ENCODE measurements at regions of chr15 and their contacts with region 1.

Region 1: GRCh38 chr15:99014803-99015676 is 7.4 kb upstream of the PGPEP1L start:
- DNase-seq: peak; percentile 75 to 92
- ATAC-seq: peak; percentile 88 to 91 (median 88)
- H3K4me3 ChIP-seq: peak overlapping the region; percentile 68
- H3K27ac ChIP-seq: peak overlapping the region; percentile 98
- H3K4me1 ChIP-seq: peaks cover 29% of the 10 kb centered on the region
- H3K27me3 ChIP-seq: peaks cover 0 to 2% (median 0%) of the 10 kb centered on the region in 3 donors
- CTCF ChIP-seq: no peak

Region 2: DNA sequence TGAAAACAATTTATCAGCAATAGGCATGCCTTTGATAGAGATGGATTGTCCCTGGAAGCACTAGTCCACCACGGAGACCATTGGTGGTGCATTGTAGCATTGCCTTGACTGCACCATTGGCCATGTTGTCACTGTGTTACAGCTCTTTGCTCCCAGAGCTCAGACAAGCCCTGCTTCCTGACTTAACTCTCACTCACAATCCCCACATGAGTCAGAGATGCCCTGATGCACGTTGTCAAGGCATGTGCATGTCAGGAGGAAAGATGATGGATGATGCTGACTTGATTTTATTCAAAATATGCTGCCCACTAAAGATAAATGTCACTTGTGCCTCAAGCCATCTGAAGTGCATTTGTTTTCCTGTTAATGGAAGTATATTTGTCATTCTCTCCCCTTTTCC is 788.5 kb before region 1 on chr15:
- intact Hi-C with region 1: no loop called
- DNase-seq: no peak
- ATAC-seq: no peak
- H3K4me3 ChIP-seq: no peak overlapping the region
- H3K27ac ChIP-seq: no peak overlapping the region
- H3K4me1 ChIP-seq: no peaks in the 10 kb centered on the region
- H3K27me3 ChIP-seq: peaks cover 0 to 2% (median 0%) of the 10 kb centered on the region in 3 donors
- CTCF ChIP-seq: no peak

Region 3: GRCh38 chr15:98954411-98954810 is 60.6 kb before region 1 on chr15:
- intact Hi-C with region 1: loop called in 1 of 2 experiments (anchors 5 kb)
- DNase-seq: peak; percentile 72 to 87
- ATAC-seq: peak; percentile 62 to 76 (median 73)
- H3K4me3 ChIP-seq: no peak overlapping the region
- H3K27ac ChIP-seq: peak overlapping the region; percentile 91
- H3K4me1 ChIP-seq: peaks cover 53% of the 10 kb centered on the region
- H3K27me3 ChIP-seq: no peaks in the 10 kb centered on the region
- CTCF ChIP-seq: no peak

Region 4: GRCh38 chr15:99053511-99054387 is 38.7 kb after region 1 on chr15:
- intact Hi-C with region 1: loop called (anchors 1 to 5 kb)
- DNase-seq: peak; percentile 27 to 65
- ATAC-seq: peak; percentile 81 to 91 (median 89)
- H3K4me3 ChIP-seq: no peak overlapping the region
- H3K27ac ChIP-seq: peak overlapping the region; percentile 90
- H3K4me1 ChIP-seq: peaks cover 14% of the 10 kb centered on the region
- H3K27me3 ChIP-seq: no peaks in the 10 kb centered on the region
- CTCF ChIP-seq: no peak